CD4-positive, alpha-beta T cell (primary cell): ENCODE measurements at regions of chr17 and their contacts with region 1.

Region 1: GRCh38 chr17:56499799-56500388 is 93.6 kb upstream of the NOG start:
- DNase-seq: peak in 5 of 14 experiments; percentile 7 to 55 (median 37)
- ATAC-seq: no peak
- H3K4me3 ChIP-seq: no peak overlapping the region
- H3K4me3 Mint-ChIP-seq: no peak overlapping the region
- H3K27ac ChIP-seq: no peak overlapping the region
- H3K27ac Mint-ChIP-seq: no peak overlapping the region
- H3K4me1 ChIP-seq: no peaks in the 10 kb centered on the region
- H3K4me1 Mint-ChIP-seq: no peaks in the 10 kb centered on the region
- H3K27me3 ChIP-seq: no peaks in the 10 kb centered on the region
- H3K27me3 Mint-ChIP-seq: no peaks in the 10 kb centered on the region
- CTCF ChIP-seq: peak; percentile 42

Region 2: GRCh38 chr17:56679115-56679766 is 179.3 kb after region 1 on chr17:
- CTCF ChIA-PET with region 1: no interaction called
- POLR2A ChIA-PET with region 1: no interaction called
- intact Hi-C with region 1: loop called in 1 of 2 experiments (anchors 10 kb)
- DNase-seq: peak in 4 of 14 experiments; percentile 19 to 55 (median 36)
- ATAC-seq: peak; percentile 60
- H3K4me3 ChIP-seq: peak overlapping the region; percentile 14
- H3K4me3 Mint-ChIP-seq: peak overlapping the region; percentile 86
- H3K27ac ChIP-seq: no peak overlapping the region
- H3K27ac Mint-ChIP-seq: no peak overlapping the region
- H3K4me1 ChIP-seq: peaks cover 35% of the 10 kb centered on the region
- H3K4me1 Mint-ChIP-seq: peaks cover 6% of the 10 kb centered on the region
- H3K27me3 ChIP-seq: peaks cover 29 to 54% of the 10 kb centered on the region in 2 experiments
- H3K27me3 Mint-ChIP-seq: peaks cover 68% of the 10 kb centered on the region
- CTCF ChIP-seq: peak; percentile 68

Region 3: DNA sequence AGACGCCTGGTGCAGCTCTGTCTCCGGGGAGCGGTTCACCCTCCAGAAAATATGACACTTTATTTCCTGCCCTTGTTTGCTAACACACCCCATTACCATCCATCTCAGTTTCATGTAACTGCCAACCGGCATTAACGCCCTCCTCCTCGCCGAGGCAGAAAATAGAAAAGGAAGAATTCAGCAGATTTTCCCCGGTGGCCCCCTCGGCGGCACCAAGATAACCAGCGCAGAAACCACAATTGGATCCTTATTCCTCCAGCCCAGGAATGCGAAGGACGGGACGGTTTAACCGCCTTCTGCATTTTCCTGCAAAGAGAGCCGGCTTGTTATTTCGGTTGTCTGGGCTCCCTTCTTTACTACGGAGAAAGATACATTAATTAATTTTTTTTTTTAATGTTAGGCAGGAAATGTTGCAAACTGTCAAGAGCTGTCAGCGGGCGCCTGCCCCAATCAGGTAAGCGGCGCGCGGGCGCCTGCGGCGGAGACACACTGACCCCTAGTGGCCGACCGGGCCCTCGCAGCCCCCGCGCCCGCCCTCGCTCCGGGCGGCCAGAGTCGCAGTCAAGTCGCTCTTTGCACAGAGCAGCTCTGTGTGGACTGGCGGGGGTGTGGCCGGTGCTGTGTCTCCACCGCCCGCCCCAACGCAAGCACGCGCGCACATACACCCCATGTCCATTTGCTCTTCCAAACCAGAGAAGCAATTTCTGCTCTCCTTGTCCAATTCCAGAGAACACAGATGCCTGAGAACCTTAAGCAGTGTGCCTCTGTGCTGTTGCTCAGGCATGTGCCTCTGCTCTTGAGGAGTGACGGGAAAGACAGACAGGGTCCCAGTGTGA is 280.2 kb after region 1 on chr17:
- CTCF ChIA-PET with region 1: interaction called, 5 read pairs
- POLR2A ChIA-PET with region 1: interaction called, 6 read pairs
- intact Hi-C with region 1: loop called (anchors 2 to 5 kb)
- DNase-seq: peak; percentile 75 to 93 (median 85)
- ATAC-seq: peak; percentile 95
- H3K4me3 ChIP-seq: peak overlapping the region; percentile 64
- H3K4me3 Mint-ChIP-seq: peak overlapping the region; percentile 90
- H3K27ac ChIP-seq: peak overlapping the region; percentile 71 to 77
- H3K27ac Mint-ChIP-seq: peak overlapping the region; percentile 97
- H3K4me1 ChIP-seq: peaks cover 22% of the 10 kb centered on the region
- H3K4me1 Mint-ChIP-seq: peaks cover 26% of the 10 kb centered on the region
- H3K27me3 ChIP-seq: no peaks in the 10 kb centered on the region
- H3K27me3 Mint-ChIP-seq: no peaks in the 10 kb centered on the region
- CTCF ChIP-seq: peak; percentile 97